ENCODE measurements at regions of chr5 and their contacts with region 1.

Region 1: DNA sequence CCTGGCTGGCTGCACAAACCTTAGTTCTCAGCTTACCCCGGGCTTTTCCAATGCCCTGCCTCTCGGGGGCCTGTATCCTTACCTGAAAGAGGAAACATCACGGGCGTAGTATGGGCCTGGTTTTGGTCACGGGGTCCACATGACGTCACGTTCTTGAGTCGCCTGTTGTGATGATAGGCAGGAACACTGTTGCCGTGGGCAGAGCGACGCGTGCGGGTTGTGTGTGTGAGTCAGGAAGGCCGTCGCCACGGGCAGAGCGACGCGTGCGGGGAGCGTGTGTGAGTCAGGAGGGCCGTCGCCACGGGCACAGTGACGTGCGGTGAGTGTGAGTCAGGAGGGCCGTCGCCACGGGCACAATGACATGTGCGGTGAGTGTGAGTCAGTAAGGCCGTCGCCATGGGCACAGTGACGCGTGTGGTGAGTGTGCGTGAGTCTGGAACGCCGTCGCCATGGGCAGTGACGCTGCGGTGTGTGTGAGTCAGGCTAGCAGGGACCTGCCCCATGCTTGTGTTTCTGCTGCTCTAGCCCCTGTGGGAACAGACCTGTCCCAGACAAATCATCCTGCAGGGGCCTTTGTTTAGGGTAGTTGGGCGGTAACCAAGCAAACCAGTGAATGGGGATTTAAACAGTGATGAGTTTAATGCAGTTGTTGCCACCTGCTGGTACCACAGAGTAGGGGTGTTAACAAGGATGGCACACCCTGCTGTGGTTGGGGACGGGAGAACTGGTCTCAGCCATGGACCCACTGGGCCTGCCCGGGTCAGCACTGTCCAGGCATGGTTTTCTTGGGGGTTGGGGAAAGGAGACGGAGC is 19.8 kb downstream of the TRIP13 start:
- DNase-seq: peak; percentile 95 to 99
- H3K4me3 ChIP-seq: peak overlapping the region; percentile 30; the same call in 1 of the 2 replicates
- H3K27ac ChIP-seq: peak overlapping the region; percentile 79
- H3K4me1 ChIP-seq: peaks cover 14% of the 10 kb centered on the region
- H3K27me3 ChIP-seq: no peaks in the 10 kb centered on the region
- CTCF ChIP-seq: peak; percentile 70

Region 2: GRCh38 chr5:42243-42642 is 870.2 kb before region 1 on chr5:
- CTCF ChIA-PET with region 1: no interaction called
- POLR2A ChIA-PET with region 1: no interaction called
- intact Hi-C with region 1: loop called (anchors 1 kb)
- DNase-seq: peak in 1 of 2 experiments; percentile 63
- H3K4me3 ChIP-seq: no peak overlapping the region
- H3K27ac ChIP-seq: no peak overlapping the region
- H3K4me1 ChIP-seq: peaks cover 4% of the 10 kb centered on the region; the same call in 1 of the 2 replicates
- H3K27me3 ChIP-seq: peaks cover 79% of the 10 kb centered on the region
- CTCF ChIP-seq: peak; percentile 66

Region 3: DNA sequence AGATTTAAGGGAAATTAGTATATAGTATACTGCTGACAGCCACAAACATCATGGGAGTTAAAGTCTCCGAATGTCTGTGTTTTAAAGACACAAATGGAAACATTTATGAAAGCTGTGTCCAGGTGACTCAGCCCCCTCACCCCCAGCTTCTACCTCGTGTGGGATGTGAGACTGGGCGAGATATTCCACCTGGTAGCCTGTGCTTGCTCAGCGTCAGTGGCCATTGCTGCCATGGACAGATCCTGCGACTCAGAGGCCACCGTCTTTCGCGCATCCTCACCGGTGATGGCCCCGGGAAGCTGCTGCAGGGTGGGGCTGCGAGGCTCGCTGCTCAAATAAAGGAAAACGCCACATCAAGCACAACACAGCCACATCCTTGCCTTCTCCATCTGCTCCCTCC is 500.8 kb before region 1 on chr5:
- CTCF ChIA-PET with region 1: no interaction called
- POLR2A ChIA-PET with region 1: no interaction called
- intact Hi-C with region 1: no loop called
- DNase-seq: no peak
- H3K4me3 ChIP-seq: no peak overlapping the region
- H3K27ac ChIP-seq: no peak overlapping the region
- H3K4me1 ChIP-seq: no peaks in the 10 kb centered on the region
- H3K27me3 ChIP-seq: no peaks in the 10 kb centered on the region
- CTCF ChIP-seq: no peak

Region 4: GRCh38 chr5:458547-459353 is 453.7 kb before region 1 on chr5:
- CTCF ChIA-PET with region 1: no interaction called
- POLR2A ChIA-PET with region 1: no interaction called
- intact Hi-C with region 1: loop called (anchors 5 kb)
- DNase-seq: peak; percentile 99
- H3K4me3 ChIP-seq: no peak overlapping the region; the same call in 1 of the 2 replicates
- H3K27ac ChIP-seq: peak overlapping the region; percentile 79
- H3K4me1 ChIP-seq: peaks cover 23% of the 10 kb centered on the region
- H3K27me3 ChIP-seq: no peaks in the 10 kb centered on the region
- CTCF ChIP-seq: 0 out of 2 replicates have a peak, but pooled peaks have one; percentile 14

Region 5: GRCh38 chr5:849651-850301 is 62.7 kb before region 1 on chr5:
- CTCF ChIA-PET with region 1: no interaction called
- POLR2A ChIA-PET with region 1: no interaction called
- intact Hi-C with region 1: no loop called
- DNase-seq: no peak
- H3K4me3 ChIP-seq: no peak overlapping the region
- H3K27ac ChIP-seq: no peak overlapping the region
- H3K4me1 ChIP-seq: no peaks in the 10 kb centered on the region
- H3K27me3 ChIP-seq: peaks cover 41% of the 10 kb centered on the region
- CTCF ChIP-seq: no peak

Region 6: DNA sequence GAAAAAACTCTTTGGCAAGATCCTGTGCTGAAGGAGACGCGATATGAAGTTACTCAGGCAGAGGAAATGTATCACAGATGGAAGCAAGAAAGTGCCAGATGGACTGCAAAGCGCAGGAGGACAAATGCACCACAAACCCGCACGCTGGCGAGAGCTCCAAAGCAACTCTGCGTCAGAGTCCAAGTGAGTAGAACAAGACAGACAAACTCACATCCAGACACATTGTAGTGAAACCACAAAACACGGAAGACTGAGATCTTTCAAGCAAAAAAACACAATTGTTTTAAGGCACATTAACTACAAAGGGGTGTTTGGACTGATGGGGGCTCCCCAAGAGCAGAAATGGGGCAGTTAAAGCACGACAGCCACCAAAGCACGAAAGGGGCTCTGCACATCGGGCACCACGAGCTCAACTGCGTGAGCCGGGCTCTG is 56.9 kb after region 1 on chr5:
- CTCF ChIA-PET with region 1: no interaction called
- POLR2A ChIA-PET with region 1: no interaction called
- intact Hi-C with region 1: no loop called
- DNase-seq: no peak
- H3K4me3 ChIP-seq: no peak overlapping the region
- H3K27ac ChIP-seq: no peak overlapping the region
- H3K4me1 ChIP-seq: no peaks in the 10 kb centered on the region
- H3K27me3 ChIP-seq: peaks cover 97% of the 10 kb centered on the region
- CTCF ChIP-seq: no peak

Measured in PC-9 (cell line).